Right ventricle myocardium inferior (tissue), 1 donor: ENCODE measurements at regions of chr10 and their contacts with region 1.

Region 1: DNA sequence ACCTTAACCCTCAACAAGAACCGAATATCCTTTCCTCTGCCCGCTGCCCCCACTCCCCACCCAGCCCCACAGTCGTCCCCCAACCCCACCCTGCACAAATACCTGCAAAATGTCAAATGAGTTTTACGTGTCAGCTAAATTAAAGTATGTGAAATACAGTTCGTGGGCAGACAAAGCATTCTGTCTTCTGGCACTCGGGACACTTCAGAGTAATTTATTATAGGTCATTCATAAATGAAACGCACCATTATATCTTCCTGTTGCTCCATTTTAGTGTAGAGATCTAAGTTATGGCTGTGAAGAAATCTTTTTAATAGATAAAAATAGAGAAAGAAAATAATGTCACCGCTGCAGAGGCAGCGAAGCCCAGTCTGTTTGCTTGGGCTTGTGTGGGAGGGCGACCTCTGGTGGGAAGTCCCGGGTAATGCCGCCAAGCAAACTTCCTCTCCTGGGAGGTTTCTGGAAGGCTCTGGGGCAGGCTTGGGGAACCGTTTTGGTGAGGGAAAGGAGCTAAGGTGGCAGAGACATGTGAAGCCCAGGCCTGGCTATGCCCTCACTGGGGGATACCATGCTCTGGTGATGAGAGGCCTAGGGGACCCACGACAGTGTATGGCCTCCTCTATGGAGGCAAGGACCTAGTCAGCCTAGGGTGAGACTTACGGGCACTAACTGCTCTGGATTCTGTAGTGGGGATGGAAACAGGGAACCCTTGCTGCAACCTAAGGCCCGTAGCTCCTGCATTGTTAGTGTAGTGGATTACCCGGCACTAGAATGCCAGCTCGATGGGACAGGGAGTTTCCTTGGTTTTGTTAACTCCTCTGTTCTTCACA is 604.9 kb downstream of the LRMDA start:
- DNase-seq: peak; percentile 76
- ATAC-seq: peak; percentile 90

Region 2: GRCh38 chr10:75187961-75188426 is 848.3 kb before region 1 on chr10:
- intact Hi-C with region 1: no loop called
- DNase-seq: no peak
- ATAC-seq: peak; percentile 26

Region 3: DNA sequence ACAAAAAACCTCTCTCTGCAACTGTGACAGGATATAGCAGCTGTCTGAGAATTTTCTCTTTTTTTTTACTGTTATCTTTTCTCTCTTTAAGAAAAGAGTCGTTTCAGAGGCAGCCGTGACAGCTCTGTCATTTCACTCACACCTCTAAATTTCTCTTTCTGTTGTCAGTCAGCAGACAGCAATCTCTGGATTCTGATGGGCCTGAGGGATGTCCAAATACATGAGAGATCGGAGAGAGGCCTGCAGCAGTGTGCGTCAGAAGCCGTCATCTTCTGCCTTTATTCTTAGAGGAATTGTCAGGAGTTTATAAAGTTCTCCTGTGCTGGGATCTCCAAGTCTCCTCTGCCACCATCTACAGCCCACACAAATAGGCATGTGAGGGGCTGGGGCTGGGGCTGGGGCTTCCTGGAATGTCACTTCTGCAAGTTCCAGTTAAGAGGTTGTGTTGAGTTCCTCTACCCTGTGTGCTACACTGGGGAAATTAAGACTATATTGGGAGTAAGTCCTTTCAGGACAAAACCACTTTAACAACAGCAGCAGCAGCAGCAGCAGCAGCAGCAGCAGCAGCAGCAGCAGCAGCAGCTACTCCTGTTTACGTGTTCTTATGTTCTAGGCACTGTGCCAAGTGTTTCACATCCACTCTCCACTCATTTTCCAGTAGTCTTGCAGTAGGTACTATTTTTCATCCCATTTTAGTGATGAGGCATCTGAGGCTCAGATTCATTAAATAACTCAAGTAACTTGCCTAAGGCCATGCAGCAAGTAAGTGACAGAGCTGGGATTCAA is 63.6 kb before region 1 on chr10:
- intact Hi-C with region 1: no loop called
- DNase-seq: no peak
- ATAC-seq: peak; percentile 55

Region 4: DNA sequence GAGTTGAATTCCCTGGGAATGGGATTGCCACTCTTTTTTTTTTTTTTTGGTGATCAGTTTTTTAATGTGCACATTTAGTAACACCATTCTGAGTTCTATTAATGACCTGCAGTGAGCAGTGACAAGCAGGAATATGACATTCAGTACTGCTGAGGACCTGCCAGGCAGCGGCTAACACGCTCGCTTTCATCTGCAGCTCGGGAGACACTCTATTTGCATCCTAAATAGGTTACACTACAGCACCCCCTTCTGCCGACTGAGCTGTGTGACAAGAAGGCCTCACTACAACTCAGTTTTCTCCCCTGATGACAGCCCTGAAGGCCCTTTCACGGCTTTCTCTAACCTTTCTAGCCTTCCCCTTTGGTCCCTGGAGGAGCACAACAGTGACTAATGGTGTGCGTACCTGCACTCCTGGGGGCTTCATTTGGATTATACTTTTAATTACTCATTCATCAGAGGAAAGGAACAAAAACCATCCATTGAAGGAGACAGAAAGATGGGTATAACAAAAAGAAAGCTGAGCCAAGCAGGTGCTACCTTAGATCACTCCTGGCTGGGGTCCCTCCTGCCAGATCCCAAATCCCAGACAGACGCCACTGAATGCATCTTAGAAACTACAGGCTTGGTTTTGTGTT is 267.5 kb after region 1 on chr10:
- intact Hi-C with region 1: loop called (anchors 1 kb)
- DNase-seq: peak; percentile 77
- ATAC-seq: peak; percentile 96

Region 5: GRCh38 chr10:76558586-76558985 is 522.3 kb after region 1 on chr10:
- intact Hi-C with region 1: no loop called
- DNase-seq: no peak
- ATAC-seq: no peak